ENCODE measurements at regions of chr17 and their contacts with region 1.

Region 1: GRCh38 chr17:13002766-13003451 is 14.9 kb downstream of the ELAC2 start:
- DNase-seq: peak; percentile 67 to 85 (median 79)
- ATAC-seq: peak; percentile 81 to 93 (median 85)
- H3K4me3 ChIP-seq: no peak overlapping the region
- H3K27ac ChIP-seq: no peak overlapping the region
- H3K4me1 ChIP-seq: peaks cover 0 to 7% (median 1%) of the 10 kb centered on the region in 12 donors
- H3K27me3 ChIP-seq: no peaks in the 10 kb centered on the region
- CTCF ChIP-seq: peak; percentile 72 to 91 (median 85)
- POLR2A ChIP-seq: no peak

Region 2: GRCh38 chr17:12180644-12181261 is 822.2 kb before region 1 on chr17:
- intact Hi-C with region 1: loop called in 9 of 10 experiments (anchors 2 to 10 kb)
- DNase-seq: peak in 1 of 5 donors; percentile 10
- ATAC-seq: peak in 2 of 4 donors; percentile 42 to 63
- H3K4me3 ChIP-seq: no peak overlapping the region
- H3K27ac ChIP-seq: no peak overlapping the region
- H3K4me1 ChIP-seq: peaks cover 0 to 7% (median 0%) of the 10 kb centered on the region in 12 donors
- H3K27me3 ChIP-seq: no peaks in the 10 kb centered on the region
- CTCF ChIP-seq: peak; percentile 51 to 79 (median 68)
- POLR2A ChIP-seq: no peak

Region 3: DNA sequence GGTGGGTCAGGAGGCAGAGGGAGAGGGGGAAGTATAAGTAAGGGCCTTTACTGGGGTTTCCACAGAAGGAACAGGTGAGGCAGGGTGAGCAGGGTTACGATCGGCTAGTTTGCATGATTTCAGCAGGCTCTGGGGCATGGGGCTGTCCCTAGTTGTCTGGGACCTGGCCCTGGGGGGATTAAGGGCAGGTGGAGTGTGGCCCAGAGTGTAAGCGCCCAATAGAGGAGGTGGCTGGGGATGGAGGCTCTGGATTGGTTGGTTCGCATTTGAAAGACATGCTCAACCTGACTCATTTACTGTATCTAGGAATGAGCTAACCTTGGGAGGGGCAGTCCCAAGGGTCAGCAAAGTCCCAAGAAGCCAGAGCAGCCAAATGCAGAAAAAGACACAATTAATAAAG is 751.9 kb before region 1 on chr17:
- intact Hi-C with region 1: loop called in 9 of 10 experiments (anchors 2 to 10 kb)
- DNase-seq: no peak
- ATAC-seq: no peak
- H3K4me3 ChIP-seq: no peak overlapping the region
- H3K27ac ChIP-seq: no peak overlapping the region
- H3K4me1 ChIP-seq: peaks cover 0 to 11% (median 0%) of the 10 kb centered on the region in 12 donors
- H3K27me3 ChIP-seq: no peaks in the 10 kb centered on the region
- CTCF ChIP-seq: no peak
- POLR2A ChIP-seq: no peak

Region 4: GRCh38 chr17:12545877-12546513 is 456.9 kb before region 1 on chr17:
- intact Hi-C with region 1: loop called in 8 of 10 experiments (anchors 5 to 10 kb)
- DNase-seq: peak in 3 of 5 donors; percentile 28 to 47 (median 30)
- ATAC-seq: peak in 3 of 4 donors; percentile 77 to 88 (median 80)
- H3K4me3 ChIP-seq: no peak overlapping the region
- H3K27ac ChIP-seq: no peak overlapping the region
- H3K4me1 ChIP-seq: peaks cover 0 to 10% (median 0%) of the 10 kb centered on the region in 12 donors
- H3K27me3 ChIP-seq: no peaks in the 10 kb centered on the region
- CTCF ChIP-seq: peak; percentile 51 to 79 (median 70)
- POLR2A ChIP-seq: no peak

Region 5: GRCh38 chr17:12744298-12744697 is 258.6 kb before region 1 on chr17:
- intact Hi-C with region 1: loop called in 2 of 10 experiments (anchors 10 kb)
- DNase-seq: peak in 4 of 5 donors; percentile 64 to 86 (median 73)
- ATAC-seq: peak; percentile 92 to 95 (median 94)
- H3K4me3 ChIP-seq: peak overlapping the region in 7 of 12 donors; percentile 16 to 46 (median 38)
- H3K27ac ChIP-seq: peak overlapping the region; percentile 44 to 88 (median 74)
- H3K4me1 ChIP-seq: peaks cover 0 to 30% (median 6%) of the 10 kb centered on the region in 12 donors
- H3K27me3 ChIP-seq: no peaks in the 10 kb centered on the region
- CTCF ChIP-seq: no peak
- POLR2A ChIP-seq: peak in 1 of 2 donors; percentile 27

Region 6: GRCh38 chr17:12928741-12929140 is 74.2 kb before region 1 on chr17:
- intact Hi-C with region 1: loop called in 3 of 10 experiments (anchors 2 to 5 kb)
- DNase-seq: no peak
- ATAC-seq: peak in 2 of 4 donors; percentile 31 to 43
- H3K4me3 ChIP-seq: no peak overlapping the region
- H3K27ac ChIP-seq: peak overlapping the region in 4 of 12 donors; percentile 14 to 66 (median 40)
- H3K4me1 ChIP-seq: peaks cover 0 to 24% (median 2%) of the 10 kb centered on the region in 12 donors
- H3K27me3 ChIP-seq: no peaks in the 10 kb centered on the region
- CTCF ChIP-seq: peak in 6 of 12 donors; percentile 10 to 29 (median 18)
- POLR2A ChIP-seq: no peak

Region 7: GRCh38 chr17:13171790-13172189 is 168.9 kb after region 1 on chr17:
- intact Hi-C with region 1: no loop called
- DNase-seq: no peak
- ATAC-seq: no peak
- H3K4me3 ChIP-seq: no peak overlapping the region
- H3K27ac ChIP-seq: no peak overlapping the region
- H3K4me1 ChIP-seq: no peaks in the 10 kb centered on the region
- H3K27me3 ChIP-seq: no peaks in the 10 kb centered on the region
- CTCF ChIP-seq: no peak
- POLR2A ChIP-seq: no peak